AG04450 (cell line): ENCODE measurements at regions of chr11 and their contacts with region 1.

Region 1: GRCh38 chr11:109963101-109963500 is 130.1 kb upstream of the ZC3H12C start:
- DNase-seq: no peak
- H3K4me3 ChIP-seq: no peak overlapping the region
- H3K27ac ChIP-seq: no peak overlapping the region
- H3K27me3 ChIP-seq: no peaks in the 10 kb centered on the region
- CTCF ChIP-seq: no peak

Region 2: DNA sequence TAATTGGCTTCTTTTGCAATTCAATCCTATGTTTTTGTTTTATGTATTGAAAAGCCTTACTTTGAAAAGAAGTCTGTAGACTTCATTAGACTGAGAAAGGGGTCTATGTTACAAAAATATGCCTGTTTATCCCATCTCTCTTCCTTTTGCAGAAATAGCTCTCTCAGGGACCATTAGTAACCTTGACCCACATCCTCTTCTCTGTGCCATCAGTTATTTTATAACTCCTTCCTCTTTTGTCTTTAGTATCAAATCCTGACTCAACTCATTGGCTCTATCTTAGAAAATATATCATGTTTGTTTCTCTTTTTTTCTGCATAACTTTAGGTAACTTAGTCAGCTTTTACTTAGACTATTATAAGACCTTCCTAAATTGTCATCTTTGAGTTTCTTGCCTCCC is 150.4 kb after region 1 on chr11:
- CTCF ChIA-PET with region 1: interaction called, 10 read pairs
- POLR2A ChIA-PET with region 1: interaction called, 3 read pairs
- DNase-seq: no peak
- H3K4me3 ChIP-seq: no peak overlapping the region
- H3K27ac ChIP-seq: no peak overlapping the region
- H3K27me3 ChIP-seq: no peaks in the 10 kb centered on the region
- CTCF ChIP-seq: no peak